ENCODE measurements at regions of chr18 and their contacts with region 1.

Region 1: GRCh38 chr18:23131693-23132319 is 3.5 kb upstream of the CABLES1 start:
- DNase-seq: peak in 13 of 14 experiments; percentile 23 to 85 (median 51)
- ATAC-seq: peak; percentile 46
- H3K4me3 ChIP-seq: no peak overlapping the region
- H3K4me3 Mint-ChIP-seq: peak overlapping the region; percentile 0
- H3K27ac ChIP-seq: no peak overlapping the region
- H3K27ac Mint-ChIP-seq: no peak overlapping the region
- H3K4me1 ChIP-seq: peaks cover 17% of the 10 kb centered on the region
- H3K4me1 Mint-ChIP-seq: peaks cover 18% of the 10 kb centered on the region
- H3K27me3 ChIP-seq: peaks cover 24 to 26% of the 10 kb centered on the region in 2 experiments
- H3K27me3 Mint-ChIP-seq: peaks cover 36% of the 10 kb centered on the region
- CTCF ChIP-seq: peak; percentile 96

Region 2: DNA sequence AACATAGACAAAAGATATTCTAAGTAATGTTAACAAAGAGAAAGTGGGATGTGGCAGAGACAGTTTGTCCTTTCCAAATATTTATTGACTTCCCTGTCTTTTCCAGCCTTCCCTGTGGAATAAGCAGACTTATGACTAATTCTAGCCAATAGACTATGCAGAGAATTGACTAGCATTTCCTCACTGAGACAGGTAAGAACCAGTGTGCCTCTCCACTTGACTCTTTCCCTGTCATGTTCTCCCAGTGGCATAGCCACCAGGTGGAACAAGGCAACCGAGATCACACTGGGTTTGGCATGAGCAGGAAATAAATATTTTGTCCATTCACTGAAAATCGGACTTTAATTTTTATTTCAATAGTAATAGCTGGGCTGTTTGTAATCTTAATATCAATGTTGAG is 546.0 kb before region 1 on chr18:
- CTCF ChIA-PET with region 1: no interaction called
- POLR2A ChIA-PET with region 1: no interaction called
- intact Hi-C with region 1: no loop called
- DNase-seq: no peak
- ATAC-seq: no peak
- H3K4me3 ChIP-seq: no peak overlapping the region
- H3K4me3 Mint-ChIP-seq: no peak overlapping the region
- H3K27ac ChIP-seq: no peak overlapping the region
- H3K27ac Mint-ChIP-seq: no peak overlapping the region
- H3K4me1 ChIP-seq: no peaks in the 10 kb centered on the region
- H3K4me1 Mint-ChIP-seq: no peaks in the 10 kb centered on the region
- H3K27me3 ChIP-seq: peaks cover 0 to 2% of the 10 kb centered on the region in 2 experiments
- H3K27me3 Mint-ChIP-seq: no peaks in the 10 kb centered on the region
- CTCF ChIP-seq: no peak

Region 3: DNA sequence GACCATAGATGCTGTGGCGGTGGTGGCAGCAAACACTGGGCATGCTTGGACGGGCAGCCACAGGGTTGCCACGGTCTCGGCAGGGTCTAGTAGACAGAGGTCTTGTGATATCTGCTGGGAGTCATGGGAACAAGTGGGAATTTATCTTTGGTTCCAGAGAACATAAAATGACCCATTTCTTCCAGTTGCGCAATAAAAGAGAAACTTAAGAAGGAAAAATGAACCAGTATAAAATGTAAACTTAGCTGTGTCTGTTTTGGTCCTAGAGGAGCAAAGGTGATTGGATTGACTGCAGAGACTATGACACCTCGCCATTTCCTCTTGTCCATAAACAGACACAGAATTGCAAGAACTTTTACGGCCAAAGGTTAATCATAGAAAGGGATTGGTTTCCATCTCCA is 331.3 kb before region 1 on chr18:
- CTCF ChIA-PET with region 1: no interaction called
- POLR2A ChIA-PET with region 1: no interaction called
- intact Hi-C with region 1: loop called in 1 of 2 experiments (anchors 5 kb)
- DNase-seq: no peak
- ATAC-seq: no peak
- H3K4me3 ChIP-seq: no peak overlapping the region
- H3K4me3 Mint-ChIP-seq: no peak overlapping the region
- H3K27ac ChIP-seq: no peak overlapping the region
- H3K27ac Mint-ChIP-seq: no peak overlapping the region
- H3K4me1 ChIP-seq: no peaks in the 10 kb centered on the region
- H3K4me1 Mint-ChIP-seq: no peaks in the 10 kb centered on the region
- H3K27me3 ChIP-seq: peaks cover 0 to 4% of the 10 kb centered on the region in 2 experiments
- H3K27me3 Mint-ChIP-seq: peaks cover 5% of the 10 kb centered on the region
- CTCF ChIP-seq: no peak

Region 4: DNA sequence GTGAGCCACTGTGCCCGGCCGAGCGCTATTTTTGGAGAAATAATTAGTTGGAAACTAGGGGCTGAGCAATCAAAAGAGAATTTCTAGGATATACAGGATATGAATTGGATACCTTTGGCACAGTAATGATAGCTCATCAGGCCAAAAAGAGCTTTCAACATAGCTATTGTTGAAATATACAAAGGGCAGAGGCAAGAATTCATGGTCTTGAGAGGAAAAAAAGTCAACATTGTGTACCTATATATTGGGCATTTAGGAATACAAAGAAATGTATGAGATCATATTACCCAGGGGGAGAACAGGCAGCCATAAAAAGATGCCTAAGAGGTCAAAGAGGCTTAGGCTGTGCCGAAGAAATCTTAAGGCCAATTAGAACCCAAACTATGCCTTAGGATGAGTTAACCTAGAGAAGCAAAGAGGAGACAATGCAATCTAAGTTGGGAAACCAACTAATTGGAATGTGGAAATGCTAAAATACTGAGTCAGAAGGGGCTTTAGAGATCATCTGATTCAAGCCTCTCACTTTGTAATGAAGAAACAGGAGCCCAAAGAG is 99.7 kb before region 1 on chr18:
- CTCF ChIA-PET with region 1: interaction called, 4 read pairs
- POLR2A ChIA-PET with region 1: no interaction called
- intact Hi-C with region 1: loop called (anchors 5 kb)
- DNase-seq: no peak
- ATAC-seq: no peak
- H3K4me3 ChIP-seq: no peak overlapping the region
- H3K4me3 Mint-ChIP-seq: no peak overlapping the region
- H3K27ac ChIP-seq: no peak overlapping the region
- H3K27ac Mint-ChIP-seq: no peak overlapping the region
- H3K4me1 ChIP-seq: no peaks in the 10 kb centered on the region
- H3K4me1 Mint-ChIP-seq: peaks cover 8% of the 10 kb centered on the region
- H3K27me3 ChIP-seq: no peaks in the 10 kb centered on the region
- H3K27me3 Mint-ChIP-seq: no peaks in the 10 kb centered on the region
- CTCF ChIP-seq: no peak

Region 5: DNA sequence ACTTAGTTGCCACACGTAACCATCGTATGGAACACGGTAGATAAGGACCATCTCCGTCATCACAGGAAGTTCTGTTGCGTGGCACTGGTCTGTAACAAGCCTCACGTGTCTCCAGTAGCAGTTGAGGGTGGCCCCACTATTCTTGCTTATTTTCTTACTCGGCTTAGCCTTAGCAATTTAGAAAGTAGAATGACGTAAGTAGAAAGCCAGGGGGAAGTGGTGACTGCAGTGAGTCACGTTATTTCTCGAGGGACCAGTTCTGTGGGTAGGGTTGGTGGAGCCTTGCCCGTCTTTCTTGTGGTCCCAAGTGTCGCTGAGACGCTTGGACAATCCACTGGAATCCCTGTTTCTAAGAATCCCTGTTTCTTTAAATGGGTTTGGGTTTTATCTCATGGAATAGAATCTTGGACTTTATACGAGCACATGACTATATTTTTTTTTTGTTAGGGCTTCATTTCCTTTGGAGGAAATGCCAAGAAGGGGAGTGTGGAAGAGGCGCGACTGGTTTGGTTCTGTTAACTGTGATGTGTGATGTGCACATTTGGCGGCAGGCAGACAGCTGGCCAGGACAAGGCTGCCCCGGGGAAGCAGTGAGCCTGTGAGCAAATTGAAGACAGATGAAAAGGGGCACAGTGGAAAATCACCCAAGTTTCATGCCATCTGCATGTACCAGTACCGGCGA is 99.7 kb after region 1 on chr18:
- CTCF ChIA-PET with region 1: no interaction called
- POLR2A ChIA-PET with region 1: no interaction called
- intact Hi-C with region 1: loop called in 1 of 2 experiments (anchors 5 kb)
- DNase-seq: peak; percentile 26 to 93 (median 54)
- ATAC-seq: peak; percentile 88
- H3K4me3 ChIP-seq: no peak overlapping the region
- H3K4me3 Mint-ChIP-seq: peak overlapping the region; percentile 57
- H3K27ac ChIP-seq: peak overlapping the region in 1 of 2 donors; percentile 55
- H3K27ac Mint-ChIP-seq: peak overlapping the region; percentile 84
- H3K4me1 ChIP-seq: peaks cover 25% of the 10 kb centered on the region
- H3K4me1 Mint-ChIP-seq: peaks cover 36% of the 10 kb centered on the region
- H3K27me3 ChIP-seq: no peaks in the 10 kb centered on the region
- H3K27me3 Mint-ChIP-seq: no peaks in the 10 kb centered on the region
- CTCF ChIP-seq: no peak

Region 6: GRCh38 chr18:23377669-23378301 is 246.0 kb after region 1 on chr18:
- CTCF ChIA-PET with region 1: interaction called, 3 read pairs
- POLR2A ChIA-PET with region 1: no interaction called
- intact Hi-C with region 1: loop called in 1 of 2 experiments (anchors 1 kb)
- DNase-seq: no peak
- ATAC-seq: no peak
- H3K4me3 ChIP-seq: no peak overlapping the region
- H3K4me3 Mint-ChIP-seq: no peak overlapping the region
- H3K27ac ChIP-seq: no peak overlapping the region
- H3K27ac Mint-ChIP-seq: no peak overlapping the region
- H3K4me1 ChIP-seq: no peaks in the 10 kb centered on the region
- H3K4me1 Mint-ChIP-seq: no peaks in the 10 kb centered on the region
- H3K27me3 ChIP-seq: no peaks in the 10 kb centered on the region
- H3K27me3 Mint-ChIP-seq: no peaks in the 10 kb centered on the region
- CTCF ChIP-seq: no peak

Region 7: GRCh38 chr18:23412351-23412964 is 280.7 kb after region 1 on chr18:
- CTCF ChIA-PET with region 1: interaction called, 4 read pairs
- POLR2A ChIA-PET with region 1: no interaction called
- intact Hi-C with region 1: loop called (anchors 1 kb)
- DNase-seq: no peak
- ATAC-seq: no peak
- H3K4me3 ChIP-seq: no peak overlapping the region
- H3K4me3 Mint-ChIP-seq: no peak overlapping the region
- H3K27ac ChIP-seq: no peak overlapping the region
- H3K27ac Mint-ChIP-seq: no peak overlapping the region
- H3K4me1 ChIP-seq: no peaks in the 10 kb centered on the region
- H3K4me1 Mint-ChIP-seq: no peaks in the 10 kb centered on the region
- H3K27me3 ChIP-seq: no peaks in the 10 kb centered on the region
- H3K27me3 Mint-ChIP-seq: no peaks in the 10 kb centered on the region
- CTCF ChIP-seq: no peak

Region 8: DNA sequence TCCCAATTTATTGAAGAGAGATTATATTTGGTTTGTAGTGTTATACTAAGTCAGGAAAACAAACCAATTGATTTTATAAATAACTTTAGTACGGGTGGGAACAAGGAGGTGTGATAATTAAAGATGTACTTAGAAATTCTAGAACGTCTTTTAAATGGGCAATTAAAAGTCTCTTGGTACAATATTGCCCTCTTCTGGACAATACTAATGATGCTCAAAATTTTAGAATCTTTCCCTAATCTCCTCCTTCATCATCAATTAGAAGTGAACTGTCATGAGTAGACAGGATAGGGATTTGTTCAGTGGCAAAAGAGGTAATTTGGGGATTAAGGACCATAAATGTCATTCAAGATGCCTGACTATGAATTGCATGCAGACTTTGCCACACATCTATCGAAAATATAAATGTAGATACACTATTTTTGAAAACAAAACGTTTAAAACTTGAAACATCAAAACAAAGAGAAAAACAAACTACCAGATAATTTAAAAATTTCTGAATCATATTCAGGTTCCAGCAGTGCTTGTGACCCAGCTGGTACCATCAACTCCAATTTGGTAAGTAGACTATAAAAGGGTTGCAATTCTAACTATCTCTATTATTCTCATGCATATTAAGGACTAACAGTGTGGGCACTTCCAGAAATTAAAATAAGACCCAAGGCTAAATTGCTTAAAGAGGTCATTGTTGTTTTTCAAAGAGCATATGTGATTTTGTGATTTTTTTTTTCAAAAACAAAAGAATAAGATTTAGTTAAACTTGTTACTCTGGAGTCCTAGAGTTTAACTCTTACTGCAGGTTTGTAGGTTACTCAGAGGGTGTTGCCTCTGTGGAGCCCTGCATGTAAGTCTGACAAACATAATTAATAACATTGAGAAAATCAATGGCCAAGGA is 681.0 kb after region 1 on chr18:
- CTCF ChIA-PET with region 1: no interaction called
- POLR2A ChIA-PET with region 1: no interaction called
- intact Hi-C with region 1: loop called in 1 of 2 experiments (anchors 5 kb)
- DNase-seq: peak in 3 of 14 experiments; percentile 47 to 57 (median 49)
- ATAC-seq: peak; percentile 49
- H3K4me3 ChIP-seq: no peak overlapping the region
- H3K4me3 Mint-ChIP-seq: no peak overlapping the region
- H3K27ac ChIP-seq: no peak overlapping the region
- H3K27ac Mint-ChIP-seq: no peak overlapping the region
- H3K4me1 ChIP-seq: peaks cover 9% of the 10 kb centered on the region
- H3K4me1 Mint-ChIP-seq: peaks cover 11% of the 10 kb centered on the region
- H3K27me3 ChIP-seq: no peaks in the 10 kb centered on the region
- H3K27me3 Mint-ChIP-seq: no peaks in the 10 kb centered on the region
- CTCF ChIP-seq: peak; percentile 63

Measured in CD4-positive, alpha-beta T cell (primary cell).